Activated CD8-positive, alpha-beta T cell treated with anti-CD3 and anti-CD28 coated beads for 36 hours (primary cell): ENCODE measurements at regions of chr2 and their contacts with region 1.

Region 1: DNA sequence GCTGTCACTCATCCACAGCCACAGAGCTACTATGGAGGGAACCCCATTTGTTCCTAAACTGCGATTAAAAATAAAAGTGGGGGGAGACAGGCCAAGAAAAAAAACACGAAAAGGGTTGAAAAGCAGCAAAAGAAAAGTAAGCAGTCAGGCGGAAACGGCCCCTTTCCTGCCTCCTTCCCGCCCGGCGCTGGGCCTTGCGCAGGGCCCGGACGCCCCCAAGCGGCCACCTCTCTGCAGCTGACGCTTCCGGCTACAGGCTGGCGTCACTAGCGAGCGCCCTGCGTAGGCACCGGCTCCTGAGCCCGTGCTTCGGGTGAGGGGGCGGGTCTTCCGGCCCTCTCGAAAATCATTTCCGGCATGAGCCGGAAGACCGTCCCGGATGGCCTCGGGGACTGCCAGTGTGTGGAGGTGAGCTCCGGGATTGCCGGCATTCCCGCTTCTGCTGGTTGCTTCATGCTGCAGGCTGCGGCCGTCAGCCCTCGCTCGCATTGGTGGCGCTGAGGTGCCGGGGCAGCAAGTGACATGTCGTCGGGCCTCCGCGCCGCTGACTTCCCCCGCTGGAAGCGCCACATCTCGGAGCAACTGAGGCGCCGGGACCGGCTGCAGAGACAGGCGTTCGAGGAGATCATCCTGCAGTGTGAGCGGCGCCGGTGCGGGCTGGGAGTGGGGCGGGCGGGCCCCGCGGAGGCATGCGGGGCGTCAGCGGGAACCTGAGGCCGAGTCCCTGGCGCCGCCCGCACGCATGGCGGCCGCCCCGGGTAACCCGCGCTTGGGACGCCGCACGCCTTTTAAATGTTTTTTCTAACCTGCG is at the start of gene ATG16L1:
- DNase-seq: peak; percentile 97
- ATAC-seq: peak; percentile 88
- H3K4me3 Mint-ChIP-seq: peak within 1 kb of the TSS; percentile 92
- H3K27ac Mint-ChIP-seq: peak within 1 kb of the TSS; percentile 100
- H3K4me1 Mint-ChIP-seq: peaks cover 63% of the 10 kb centered on the region
- H3K27me3 Mint-ChIP-seq: no peaks in the 10 kb centered on the region
- CTCF ChIP-seq: peak; percentile 83
- total RNA-seq, gene ATG16L1: 22.1 to 24.4 TPM

Region 2: DNA sequence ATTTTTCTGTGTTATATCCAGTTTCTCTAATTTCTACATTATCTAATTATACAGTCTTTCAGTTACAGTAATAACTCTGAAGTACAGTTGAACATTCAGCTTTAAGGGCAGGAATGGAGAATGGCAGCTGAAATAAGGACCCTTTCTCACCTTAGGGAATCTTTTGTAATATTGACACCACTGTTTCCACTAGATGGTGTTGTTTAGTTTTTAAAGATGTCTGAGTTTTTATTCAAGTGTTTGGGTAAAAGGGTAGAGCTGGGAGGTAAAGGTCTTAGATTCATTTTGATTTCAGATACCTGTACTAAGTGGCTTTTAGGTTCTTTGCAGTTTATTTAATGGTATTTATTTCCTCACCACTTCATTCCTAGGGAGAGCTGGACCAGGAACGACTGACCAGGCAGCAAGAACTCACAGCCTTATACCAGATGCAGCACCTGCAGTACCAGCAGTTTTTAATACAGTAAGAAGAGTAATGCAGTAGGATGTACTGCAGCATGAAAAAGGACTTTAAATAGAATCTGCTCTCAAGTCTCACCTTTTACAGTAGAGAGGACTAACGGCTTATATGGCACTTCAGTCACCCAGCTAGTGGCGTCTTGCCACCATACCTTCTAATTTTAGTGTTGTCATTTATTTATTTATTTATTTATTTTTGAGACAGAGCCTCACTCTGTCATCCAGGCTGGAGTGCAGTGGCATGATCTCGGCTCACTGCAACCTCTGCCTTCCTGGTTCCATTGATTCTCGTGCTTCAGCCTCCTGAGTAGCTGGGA is 442.0 kb before region 1 on chr2:
- CTCF ChIA-PET with region 1: no interaction called
- POLR2A ChIA-PET with region 1: no interaction called
- intact Hi-C with region 1: no loop called
- DNase-seq: no peak
- ATAC-seq: no peak
- H3K4me3 Mint-ChIP-seq: no peak overlapping the region
- H3K27ac Mint-ChIP-seq: no peak overlapping the region
- H3K4me1 Mint-ChIP-seq: no peaks in the 10 kb centered on the region
- H3K27me3 Mint-ChIP-seq: no peaks in the 10 kb centered on the region
- CTCF ChIP-seq: peak; percentile 23

Region 3: DNA sequence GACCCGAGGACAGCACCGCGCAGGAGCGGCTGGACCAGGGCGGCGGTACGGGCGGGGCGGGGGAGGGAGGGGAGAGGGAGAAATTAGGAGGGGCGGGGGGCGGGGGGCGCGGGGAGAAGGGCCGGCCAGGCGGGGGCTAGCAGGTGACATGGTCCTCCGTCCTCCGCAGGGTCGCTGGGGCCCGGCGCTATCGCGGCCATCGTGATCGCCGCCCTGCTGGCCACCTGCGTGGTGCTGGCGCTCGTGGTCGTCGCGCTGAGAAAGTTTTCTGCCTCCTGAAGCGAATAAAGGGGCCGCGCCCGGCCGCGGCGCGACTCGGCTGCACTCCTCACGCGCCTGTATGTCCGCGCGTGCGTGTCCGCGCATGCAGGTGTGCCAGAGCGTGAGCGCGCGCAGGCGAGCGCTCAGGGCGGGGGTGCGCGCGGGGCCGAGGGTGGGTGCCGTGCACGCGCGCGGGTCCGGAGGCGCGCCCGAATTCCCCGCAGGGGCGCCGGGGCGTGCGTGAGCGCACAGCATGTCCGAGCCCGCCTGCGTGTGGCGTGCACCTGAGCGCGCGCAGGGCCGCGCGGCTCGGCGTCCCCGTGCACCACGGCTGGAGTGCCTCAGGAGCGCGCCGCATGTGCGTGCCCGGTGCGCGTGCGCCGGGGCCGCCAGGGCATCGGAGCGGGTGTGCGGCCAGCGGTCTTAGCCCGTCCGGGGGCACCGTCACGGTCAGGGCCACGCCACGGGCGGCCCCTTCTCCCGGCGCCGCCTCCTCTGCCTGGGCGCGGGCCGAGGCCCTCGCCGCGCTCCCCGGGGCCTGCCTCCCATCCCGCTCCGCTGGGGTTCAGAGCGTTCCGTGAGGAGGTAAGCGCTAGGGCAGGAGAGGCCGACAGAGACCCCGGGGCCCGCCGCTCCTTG is 375.2 kb before region 1 on chr2:
- CTCF ChIA-PET with region 1: no interaction called
- POLR2A ChIA-PET with region 1: no interaction called
- intact Hi-C with region 1: loop called (anchors 10 kb)
- DNase-seq: peak; percentile 50
- ATAC-seq: peak; percentile 68
- H3K4me3 Mint-ChIP-seq: peak overlapping the region; percentile 61
- H3K27ac Mint-ChIP-seq: no peak overlapping the region
- H3K4me1 Mint-ChIP-seq: peaks cover 4% of the 10 kb centered on the region
- H3K27me3 Mint-ChIP-seq: peaks cover 17% of the 10 kb centered on the region
- CTCF ChIP-seq: peak; percentile 42

Region 4: DNA sequence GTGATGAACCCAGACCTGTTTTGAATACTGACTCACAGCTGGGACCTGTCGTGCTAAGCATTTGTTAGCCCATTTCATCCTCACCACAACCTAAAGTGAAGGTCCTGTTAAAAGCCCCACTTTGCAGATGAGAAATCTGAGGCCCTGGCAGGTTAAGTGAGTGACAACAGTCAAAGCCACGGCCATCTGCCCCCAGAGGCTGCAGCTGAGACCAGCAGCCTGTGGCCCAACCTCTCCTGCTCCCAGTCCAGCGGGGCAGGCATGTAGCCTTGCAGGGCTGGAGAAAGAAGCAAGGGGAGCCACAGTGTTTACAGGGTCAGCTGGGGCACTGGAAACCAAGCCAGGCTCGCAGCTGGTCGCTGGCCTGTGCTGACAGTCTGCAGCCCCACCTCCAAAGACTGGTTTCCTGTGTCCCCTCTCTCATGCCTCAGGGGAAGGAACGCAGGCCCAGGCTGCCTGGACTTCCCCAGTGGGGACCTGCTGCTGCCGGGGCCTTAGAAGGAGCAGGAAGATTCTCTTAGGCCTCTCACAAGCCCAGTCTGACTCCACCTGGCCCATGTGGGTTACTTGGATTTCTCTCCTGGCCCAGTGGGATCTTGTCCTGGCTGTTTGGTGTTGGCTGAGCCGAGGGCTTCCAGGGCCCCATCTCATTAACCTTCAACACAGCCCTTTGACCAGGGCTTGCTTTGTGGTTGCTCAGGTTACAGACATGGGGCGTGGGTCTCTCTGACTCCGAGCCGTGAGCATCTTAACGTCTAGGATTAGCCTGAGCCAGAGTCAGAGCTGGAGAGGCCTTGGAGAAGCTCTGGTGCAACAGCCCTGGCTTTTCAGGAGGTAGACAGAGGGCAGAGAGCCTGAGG is 189.7 kb before region 1 on chr2:
- CTCF ChIA-PET with region 1: interaction called, 20 read pairs
- POLR2A ChIA-PET with region 1: interaction called, 27 read pairs
- intact Hi-C with region 1: loop called (anchors 5 kb)
- DNase-seq: peak; percentile 74
- ATAC-seq: peak; percentile 45
- H3K4me3 Mint-ChIP-seq: peak overlapping the region; percentile 89
- H3K27ac Mint-ChIP-seq: peak overlapping the region; percentile 97
- H3K4me1 Mint-ChIP-seq: peaks cover 44% of the 10 kb centered on the region
- H3K27me3 Mint-ChIP-seq: no peaks in the 10 kb centered on the region
- CTCF ChIP-seq: peak; percentile 63

Region 5: GRCh38 chr2:233234264-233234663 is 17.2 kb before region 1 on chr2:
- CTCF ChIA-PET with region 1: interaction called, 5 read pairs
- POLR2A ChIA-PET with region 1: interaction called, 10 read pairs
- intact Hi-C with region 1: no loop called
- DNase-seq: peak; percentile 71
- ATAC-seq: peak; percentile 57
- H3K4me3 Mint-ChIP-seq: no peak overlapping the region
- H3K27ac Mint-ChIP-seq: peak overlapping the region; percentile 71
- H3K4me1 Mint-ChIP-seq: peaks cover 52% of the 10 kb centered on the region
- H3K27me3 Mint-ChIP-seq: no peaks in the 10 kb centered on the region
- CTCF ChIP-seq: no peak

Region 6: DNA sequence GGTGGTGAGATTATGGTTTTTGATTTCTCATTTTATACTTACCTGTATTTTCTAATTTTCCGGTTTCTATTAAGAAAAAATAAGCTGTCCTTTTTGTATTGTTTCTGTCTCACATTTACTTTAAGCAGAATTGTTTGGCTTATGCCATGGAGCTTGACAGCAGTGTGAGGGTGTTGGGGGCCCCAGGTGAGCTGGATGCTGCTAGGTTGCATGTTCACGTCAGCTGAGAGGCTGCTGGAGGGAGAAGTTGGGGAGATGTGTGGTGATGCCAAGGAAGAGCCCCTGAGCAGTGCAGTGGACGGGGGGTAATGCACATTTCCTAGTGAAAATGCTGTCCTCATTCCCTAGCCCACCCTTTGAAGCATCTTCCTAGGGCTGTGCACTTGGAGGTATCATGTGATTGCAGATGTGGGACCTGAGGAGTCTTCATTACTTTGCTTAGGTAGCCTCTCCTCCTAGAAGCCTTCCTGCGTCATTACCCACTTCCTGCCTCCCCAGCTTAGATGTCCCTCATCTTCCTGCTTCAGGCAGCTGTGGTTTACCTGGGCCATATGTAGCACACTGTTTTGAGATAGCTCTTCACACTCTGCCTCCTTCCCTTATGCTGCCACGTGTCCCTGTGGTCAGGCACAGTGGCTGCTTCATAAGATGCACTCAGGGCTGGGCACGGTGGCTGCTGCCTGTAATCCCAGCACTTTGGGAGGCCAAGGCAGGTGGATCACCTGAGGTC is 16.2 kb after region 1 on chr2:
- CTCF ChIA-PET with region 1: interaction called, 30 read pairs
- POLR2A ChIA-PET with region 1: interaction called, 22 read pairs
- intact Hi-C with region 1: loop called (anchors 1 kb)
- DNase-seq: peak; percentile 91
- ATAC-seq: peak; percentile 94
- H3K4me3 Mint-ChIP-seq: peak overlapping the region; percentile 60
- H3K27ac Mint-ChIP-seq: peak overlapping the region; percentile 95
- H3K4me1 Mint-ChIP-seq: peaks cover 59% of the 10 kb centered on the region
- H3K27me3 Mint-ChIP-seq: no peaks in the 10 kb centered on the region
- CTCF ChIP-seq: no peak

Region 7: DNA sequence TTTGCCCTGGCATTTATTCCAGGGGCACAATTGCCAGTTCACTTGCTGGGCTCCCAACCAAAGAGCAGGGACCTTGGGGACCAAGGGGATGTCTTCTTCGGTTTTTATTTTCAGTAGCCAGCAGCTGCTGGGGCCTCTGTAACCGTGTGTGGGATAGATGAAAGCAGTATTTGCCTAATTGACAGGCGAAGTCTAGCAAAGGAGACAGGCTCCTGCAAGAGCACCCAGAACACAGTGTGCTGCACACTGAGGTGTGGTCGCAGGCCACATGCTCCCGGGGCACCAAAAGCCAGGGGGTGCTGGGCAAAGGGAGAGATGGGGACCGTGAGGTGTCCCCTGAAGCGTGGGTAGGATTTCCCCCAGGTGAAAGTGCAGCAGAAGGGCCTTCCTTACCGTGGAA is 61.4 kb after region 1 on chr2:
- CTCF ChIA-PET with region 1: no interaction called
- POLR2A ChIA-PET with region 1: no interaction called
- intact Hi-C with region 1: no loop called
- DNase-seq: no peak
- ATAC-seq: no peak
- H3K4me3 Mint-ChIP-seq: no peak overlapping the region
- H3K27ac Mint-ChIP-seq: no peak overlapping the region
- H3K4me1 Mint-ChIP-seq: peaks cover 3% of the 10 kb centered on the region
- H3K27me3 Mint-ChIP-seq: no peaks in the 10 kb centered on the region
- CTCF ChIP-seq: no peak

Region 8: GRCh38 chr2:233700028-233700635 is 448.6 kb after region 1 on chr2:
- CTCF ChIA-PET with region 1: no interaction called
- POLR2A ChIA-PET with region 1: no interaction called
- intact Hi-C with region 1: no loop called
- DNase-seq: no peak
- ATAC-seq: no peak
- H3K4me3 Mint-ChIP-seq: no peak overlapping the region
- H3K27ac Mint-ChIP-seq: no peak overlapping the region
- H3K4me1 Mint-ChIP-seq: no peaks in the 10 kb centered on the region
- H3K27me3 Mint-ChIP-seq: peaks cover 8% of the 10 kb centered on the region
- CTCF ChIP-seq: no peak

Region 9: GRCh38 chr2:233756429-233757081 is 505.0 kb after region 1 on chr2:
- CTCF ChIA-PET with region 1: no interaction called
- POLR2A ChIA-PET with region 1: no interaction called
- intact Hi-C with region 1: no loop called
- DNase-seq: no peak
- ATAC-seq: no peak
- H3K4me3 Mint-ChIP-seq: no peak overlapping the region
- H3K27ac Mint-ChIP-seq: no peak overlapping the region
- H3K4me1 Mint-ChIP-seq: no peaks in the 10 kb centered on the region
- H3K27me3 Mint-ChIP-seq: peaks cover 1% of the 10 kb centered on the region
- CTCF ChIP-seq: no peak